Left cardiac atrium (tissue), 4 donors: ENCODE measurements at regions of chr10 and their contacts with region 1.

Region 1: GRCh38 chr10:89029785-89030437 is 39.3 kb downstream of the FAS start:
- DNase-seq: peak; percentile 81
- ATAC-seq: peak; percentile 62 to 63

Region 2: DNA sequence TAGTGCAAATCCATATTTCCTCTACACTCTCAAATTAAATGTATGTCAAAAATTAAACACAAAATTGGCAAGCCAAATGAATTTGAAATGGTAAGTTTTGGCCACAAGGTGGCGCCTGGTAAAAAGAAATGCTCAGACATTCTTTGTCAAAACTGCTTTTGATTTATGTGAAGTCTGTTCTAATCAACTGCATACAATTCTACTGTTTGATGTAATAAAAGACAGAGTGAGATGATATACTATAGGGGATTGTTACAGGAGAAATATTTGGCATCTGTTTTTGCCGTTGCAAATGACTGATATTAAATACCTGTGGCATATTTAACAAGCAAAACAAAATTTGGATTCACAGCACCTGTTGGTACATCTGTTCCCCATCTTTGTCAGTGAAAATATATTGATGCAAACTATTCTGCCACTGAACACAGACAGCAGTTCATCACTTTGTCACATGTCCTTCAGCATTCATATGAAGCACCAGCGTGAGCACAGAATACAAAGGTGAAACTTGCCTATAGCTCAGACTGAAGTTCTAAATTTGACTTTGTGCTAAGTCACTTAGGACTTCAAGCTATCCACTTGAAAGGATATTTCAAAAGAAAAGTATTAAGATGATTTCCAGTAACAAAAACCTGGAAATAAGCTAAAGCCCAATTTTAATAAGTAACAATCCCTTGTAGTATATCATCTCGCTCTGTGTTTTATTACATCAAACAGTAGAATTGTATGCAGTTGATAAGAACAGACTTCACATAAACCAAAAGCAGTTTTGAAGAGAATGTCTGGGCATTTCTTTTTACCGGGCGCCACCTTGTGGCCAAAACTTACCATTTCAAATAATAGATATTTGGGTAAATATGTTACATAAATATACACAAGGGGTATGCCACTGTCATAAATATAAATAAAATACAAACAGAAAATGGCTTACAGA is 187.4 kb after region 1 on chr10:
- intact Hi-C with region 1: loop called (anchors 1 to 5 kb)
- DNase-seq: peak; percentile 56
- ATAC-seq: peak; percentile 39 to 45